Activated T-helper 1 cell treated with anti-CD3 and anti-CD28 coated beads, Interleukin-12 subunit alpha, Interleukin-12 subunit beta, Interleukin-2, Interleukin-4 antibody, amounts not matched to agents 30 ng/mL and 10 ng/mL and 1 ng/mL, durations not matched to agents 14 hours and 24 hours and 36 hours (primary cell): ENCODE measurements at regions of chr5 and their contacts with region 1.

Region 1: GRCh38 chr5:9544502-9545135 is 1.3 kb downstream of the SEMA5A start:
- DNase-seq: no peak
- H3K4me3 Mint-ChIP-seq: peak overlapping the region; percentile 17
- H3K27ac Mint-ChIP-seq: no peak overlapping the region
- H3K4me1 Mint-ChIP-seq: no peaks in the 10 kb centered on the region
- H3K27me3 Mint-ChIP-seq: peaks cover 18% of the 10 kb centered on the region

Region 2: GRCh38 chr5:9361835-9362234 is 182.8 kb before region 1 on chr5:
- intact Hi-C with region 1: loop called (anchors 10 kb)
- DNase-seq: no peak
- H3K4me3 Mint-ChIP-seq: no peak overlapping the region
- H3K27ac Mint-ChIP-seq: no peak overlapping the region
- H3K4me1 Mint-ChIP-seq: no peaks in the 10 kb centered on the region
- H3K27me3 Mint-ChIP-seq: no peaks in the 10 kb centered on the region

Region 3: DNA sequence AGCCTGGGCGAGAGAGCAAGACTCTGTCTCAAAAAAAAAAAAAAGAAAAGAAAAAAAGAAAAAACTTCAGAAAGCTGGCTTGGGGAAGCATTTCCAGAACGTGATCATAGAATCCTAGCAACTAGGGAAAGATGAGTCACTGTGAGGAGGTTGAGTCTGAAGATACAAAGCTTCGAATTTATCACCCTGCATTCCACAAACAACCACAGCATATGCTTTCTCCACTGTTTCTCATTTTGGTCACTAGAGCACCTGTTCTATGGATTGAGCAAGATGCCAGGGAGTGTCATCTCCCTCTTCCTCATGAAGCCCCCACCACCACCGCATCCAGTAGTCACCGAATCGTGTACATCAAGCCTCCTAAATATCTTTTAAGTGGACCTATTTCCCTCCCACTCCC is 36.6 kb before region 1 on chr5:
- intact Hi-C with region 1: no loop called
- DNase-seq: no peak
- H3K4me3 Mint-ChIP-seq: no peak overlapping the region
- H3K27ac Mint-ChIP-seq: no peak overlapping the region
- H3K4me1 Mint-ChIP-seq: no peaks in the 10 kb centered on the region
- H3K27me3 Mint-ChIP-seq: no peaks in the 10 kb centered on the region